GM12878 (cell line): ENCODE measurements at regions of chr18 and their contacts with region 1.

Region 1: DNA sequence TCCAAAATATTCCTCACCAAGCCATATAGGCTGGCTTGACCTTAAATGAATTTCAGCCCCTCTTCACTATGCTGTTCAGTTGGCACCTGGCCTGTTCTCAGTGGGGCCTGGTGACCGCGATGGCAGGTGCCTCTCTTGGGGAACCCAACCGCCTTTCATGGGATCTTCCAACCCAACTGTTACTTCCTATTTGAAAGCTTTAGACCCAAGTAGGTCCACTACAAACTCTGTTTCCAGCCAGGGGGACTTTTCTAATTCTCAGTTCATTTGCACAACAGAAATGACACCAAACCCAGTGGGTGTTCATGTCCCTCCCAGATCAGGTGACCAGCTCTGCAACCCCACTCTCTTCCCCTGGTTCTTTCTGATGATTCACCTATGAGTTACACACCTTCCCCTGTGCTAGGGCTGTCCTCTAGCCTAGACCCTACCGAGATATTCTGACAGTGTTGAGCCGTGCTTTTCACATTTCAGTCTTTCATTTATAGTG is 35.6 kb upstream of the NDUFV2 start:
- DNase-seq: peak; percentile 96
- ATAC-seq: peak; percentile 86
- H3K4me3 ChIP-seq: peak overlapping the region; percentile 8; the same call in 1 of the 2 replicates
- H3K27ac ChIP-seq: peak overlapping the region; percentile 96
- H3K4me1 ChIP-seq: peaks cover 66% of the 10 kb centered on the region
- H3K27me3 ChIP-seq: no peaks in the 10 kb centered on the region
- CTCF ChIP-seq: no peak
- EP300 ChIP-seq: peak; percentile 73 to 89
- POLR2A ChIP-seq: peak; percentile 23
- RAD21 ChIP-seq: no peak

Region 2: DNA sequence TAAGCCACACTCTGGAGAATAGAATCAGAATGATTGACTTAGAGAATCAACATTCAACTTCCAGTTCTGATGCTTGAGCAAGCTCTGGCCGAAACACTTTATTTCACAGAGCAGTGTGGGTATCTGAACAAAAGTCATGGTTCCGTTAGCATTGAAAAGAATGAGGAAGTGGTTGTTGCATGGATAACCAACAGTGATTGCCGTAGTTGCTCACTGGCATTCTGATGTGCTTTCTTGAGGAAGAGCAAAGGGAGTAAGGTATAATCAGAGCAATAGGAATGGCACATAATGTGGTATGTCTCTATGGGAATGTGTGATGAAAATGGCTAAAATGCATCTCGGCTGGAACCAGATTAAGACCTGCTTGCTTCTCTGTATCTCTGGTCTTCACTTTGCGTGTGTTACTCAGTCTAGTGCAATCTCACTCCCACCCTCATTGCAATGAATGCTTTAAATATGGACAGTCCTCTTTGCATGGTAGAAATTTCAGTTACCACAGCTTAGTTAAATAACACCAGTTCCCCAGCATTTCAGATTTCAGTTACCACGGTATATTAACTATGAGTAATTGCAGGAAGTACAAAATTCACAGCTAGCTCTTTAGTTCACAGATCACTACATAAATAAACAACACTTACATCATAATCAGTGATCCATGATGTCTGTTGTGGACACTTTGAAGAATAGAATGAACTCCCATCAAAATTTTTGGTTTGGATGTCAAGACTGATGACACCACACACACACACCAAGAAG is 465.4 kb before region 1 on chr18:
- CTCF ChIA-PET with region 1: no interaction called
- POLR2A ChIA-PET with region 1: no interaction called
- RAD21 ChIA-PET with region 1: interaction called, 4 read pairs
- SMC1A ChIA-PET with region 1: interaction called, 4 read pairs
- in situ Hi-C with region 1: no loop called
- intact Hi-C with region 1: loop called (anchors 2 kb)
- DNase-seq: peak; percentile 87
- ATAC-seq: peak; percentile 81
- H3K4me3 ChIP-seq: no peak overlapping the region
- H3K27ac ChIP-seq: peak overlapping the region; percentile 92
- H3K4me1 ChIP-seq: peaks cover 43% of the 10 kb centered on the region
- H3K27me3 ChIP-seq: no peaks in the 10 kb centered on the region
- CTCF ChIP-seq: no peak
- EP300 ChIP-seq: peak; percentile 83 to 85; a peak in 3 of 4 replicates
- POLR2A ChIP-seq: no peak
- RAD21 ChIP-seq: peak; percentile 14; the same call in 1 of the 2 replicates

Region 3: GRCh38 chr18:8771930-8772329 is 294.9 kb before region 1 on chr18:
- CTCF ChIA-PET with region 1: no interaction called
- POLR2A ChIA-PET with region 1: no interaction called
- RAD21 ChIA-PET with region 1: no interaction called
- SMC1A ChIA-PET with region 1: no interaction called
- in situ Hi-C with region 1: no loop called
- intact Hi-C with region 1: no loop called
- DNase-seq: no peak
- ATAC-seq: no peak
- H3K4me3 ChIP-seq: no peak overlapping the region
- H3K27ac ChIP-seq: no peak overlapping the region
- H3K4me1 ChIP-seq: no peaks in the 10 kb centered on the region
- H3K27me3 ChIP-seq: peaks cover 0 to 3% of the 10 kb centered on the region in 2 experiments; a peak in 2 of 4 replicates
- CTCF ChIP-seq: no peak
- EP300 ChIP-seq: no peak
- POLR2A ChIP-seq: no peak
- RAD21 ChIP-seq: no peak

Region 4: GRCh38 chr18:9055185-9055584 is 11.7 kb before region 1 on chr18:
- CTCF ChIA-PET with region 1: interaction called, 12 read pairs
- POLR2A ChIA-PET with region 1: no interaction called
- RAD21 ChIA-PET with region 1: interaction called, 4 read pairs
- SMC1A ChIA-PET with region 1: interaction called, 9 read pairs
- in situ Hi-C with region 1: no loop called
- intact Hi-C with region 1: no loop called
- DNase-seq: no peak
- ATAC-seq: peak; percentile 89
- H3K4me3 ChIP-seq: no peak overlapping the region
- H3K27ac ChIP-seq: no peak overlapping the region
- H3K4me1 ChIP-seq: peaks cover 2% of the 10 kb centered on the region; the same call in 1 of the 2 replicates
- H3K27me3 ChIP-seq: no peaks in the 10 kb centered on the region
- CTCF ChIP-seq: peak in 2 of 3 experiments; percentile 18 to 43; a peak in 1 of 6 replicates
- EP300 ChIP-seq: no peak
- POLR2A ChIP-seq: no peak
- RAD21 ChIP-seq: peak; percentile 40

Region 5: GRCh38 chr18:9102508-9103375 is 35.9 kb after region 1 on chr18 and contains the start of gene NDUFV2:
- CTCF ChIA-PET with region 1: interaction called, 29 read pairs
- POLR2A ChIA-PET with region 1: interaction called, 6 read pairs
- RAD21 ChIA-PET with region 1: interaction called, 5 read pairs
- SMC1A ChIA-PET with region 1: interaction called, 5 read pairs
- in situ Hi-C with region 1: no loop called
- intact Hi-C with region 1: no loop called
- DNase-seq: peak; percentile 77
- ATAC-seq: peak; percentile 93
- H3K4me3 ChIP-seq: peak within 1 kb of the TSS; percentile 87
- H3K27ac ChIP-seq: peak within 1 kb of the TSS; percentile 85
- H3K4me1 ChIP-seq: peaks cover 5% of the 10 kb centered on the region
- H3K27me3 ChIP-seq: no peaks in the 10 kb centered on the region
- CTCF ChIP-seq: no peak
- EP300 ChIP-seq: no peak
- POLR2A ChIP-seq: peak; percentile 87
- RAD21 ChIP-seq: no peak
- polyA plus RNA-seq, gene NDUFV2: 409 to 471 TPM

Region 6: GRCh38 chr18:9136315-9137155 is 69.7 kb after region 1 on chr18 and contains the start of gene ANKRD12:
- CTCF ChIA-PET with region 1: interaction called, 79 read pairs
- POLR2A ChIA-PET with region 1: interaction called, 23 read pairs
- RAD21 ChIA-PET with region 1: interaction called, 20 read pairs
- SMC1A ChIA-PET with region 1: interaction called, 53 read pairs
- in situ Hi-C with region 1: loop called (anchors 5 kb)
- intact Hi-C with region 1: no loop called
- DNase-seq: peak; percentile 89
- ATAC-seq: peak; percentile 86
- H3K4me3 ChIP-seq: peak within 1 kb of the TSS; percentile 92
- H3K27ac ChIP-seq: peak within 1 kb of the TSS; percentile 80
- H3K4me1 ChIP-seq: no peaks in the 10 kb centered on the region; the same call in 1 of the 2 replicates
- H3K27me3 ChIP-seq: no peaks in the 10 kb centered on the region
- CTCF ChIP-seq: no peak
- EP300 ChIP-seq: 0 out of 4 replicates have a peak, but pooled peaks of 1 of the 2 experiments have one; percentile 16
- POLR2A ChIP-seq: peak; percentile 90
- RAD21 ChIP-seq: no peak
- polyA plus RNA-seq, gene ANKRD12: 20.0 to 20.3 TPM

Region 7: DNA sequence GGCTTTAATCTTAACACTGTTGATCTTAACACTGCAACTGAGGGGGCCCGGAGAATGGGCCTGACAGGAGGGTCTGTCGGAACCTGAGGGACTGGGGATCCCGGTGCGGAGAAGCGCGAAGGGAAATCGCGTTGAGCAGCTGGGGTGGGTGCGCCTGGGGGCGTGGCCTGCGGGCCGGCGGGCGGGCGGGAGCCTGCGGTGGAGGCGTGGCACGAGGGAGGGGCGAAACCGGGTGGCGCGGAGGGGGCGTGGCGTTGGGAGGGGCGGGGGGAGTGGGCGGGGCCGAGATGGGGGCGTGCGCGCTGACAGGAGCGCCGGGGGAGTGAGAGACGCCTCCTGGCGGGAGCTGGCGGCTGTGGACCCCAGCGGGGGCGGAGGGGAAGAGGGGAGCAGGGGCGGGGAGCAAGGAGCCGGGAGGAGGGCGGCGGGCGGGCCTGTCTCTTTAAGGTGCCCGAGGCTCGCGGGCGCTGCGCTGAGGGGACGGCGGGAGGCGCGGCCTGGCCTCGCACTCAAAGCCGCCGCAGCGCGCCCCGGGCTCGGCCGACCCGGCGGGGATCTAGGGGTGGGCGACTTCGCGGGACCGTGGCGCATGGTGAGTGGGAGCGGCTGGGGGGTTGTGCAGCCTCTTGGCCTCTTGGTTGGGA is 267.6 kb after region 1 on chr18 and contains the start of gene TWSG1:
- CTCF ChIA-PET with region 1: no interaction called
- POLR2A ChIA-PET with region 1: no interaction called
- RAD21 ChIA-PET with region 1: interaction called, 4 read pairs
- SMC1A ChIA-PET with region 1: no interaction called
- in situ Hi-C with region 1: loop called (anchors 10 kb)
- intact Hi-C with region 1: no loop called
- DNase-seq: peak; percentile 62
- ATAC-seq: peak; percentile 95
- H3K4me3 ChIP-seq: peak within 1 kb of the TSS; percentile 89
- H3K27ac ChIP-seq: peak within 1 kb of the TSS; percentile 36
- H3K4me1 ChIP-seq: peaks cover 5% of the 10 kb centered on the region; the same call in 1 of the 2 replicates
- H3K27me3 ChIP-seq: no peaks in the 10 kb centered on the region
- CTCF ChIP-seq: peak in 2 of 3 experiments; percentile 49 to 64; a peak in 3 of 6 replicates
- EP300 ChIP-seq: no peak
- POLR2A ChIP-seq: peak; percentile 78
- RAD21 ChIP-seq: peak; percentile 46
- polyA plus RNA-seq, gene TWSG1: 11.1 to 11.4 TPM

Region 8: DNA sequence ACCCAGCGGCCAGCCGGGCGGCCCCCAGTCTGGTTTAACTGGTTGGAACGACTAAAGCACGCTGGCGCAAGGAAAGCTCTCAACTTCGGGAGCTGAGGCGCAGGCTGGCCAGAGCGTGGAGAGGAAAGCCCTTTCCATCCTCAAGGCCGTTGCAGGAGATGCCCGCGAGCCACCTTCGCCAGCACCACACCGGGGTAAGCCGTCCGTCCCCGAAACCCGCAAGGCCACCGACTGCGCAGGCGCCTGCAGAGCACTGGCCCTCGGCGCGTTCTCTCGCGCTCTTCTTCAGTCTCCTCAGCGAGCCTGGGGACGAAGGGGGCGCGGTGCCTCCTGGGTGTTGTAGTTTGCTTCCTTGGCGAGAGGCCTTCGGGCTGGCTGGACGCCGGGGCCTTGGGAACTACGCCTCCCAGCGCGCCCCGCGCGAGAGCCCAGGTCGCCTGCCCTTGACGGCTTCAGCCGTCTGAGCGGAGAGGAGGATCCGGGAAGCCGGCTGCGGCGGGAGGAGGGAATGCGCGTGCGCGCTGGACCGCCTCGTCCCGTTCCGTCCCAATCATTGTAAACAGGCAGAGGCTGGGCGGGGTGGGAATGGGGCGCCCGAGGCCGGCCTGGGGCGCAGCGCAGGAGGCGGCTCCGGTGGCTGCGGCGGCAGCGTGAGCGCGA is 408.3 kb after region 1 on chr18 and contains the start of gene RALBP1:
- CTCF ChIA-PET with region 1: no interaction called
- POLR2A ChIA-PET with region 1: interaction called, 3 read pairs
- RAD21 ChIA-PET with region 1: no interaction called
- SMC1A ChIA-PET with region 1: no interaction called
- in situ Hi-C with region 1: no loop called
- intact Hi-C with region 1: loop called (anchors 5 kb)
- DNase-seq: peak; percentile 94
- ATAC-seq: peak; percentile 96
- H3K4me3 ChIP-seq: peak within 1 kb of the TSS; percentile 97
- H3K27ac ChIP-seq: peak within 1 kb of the TSS; percentile 83
- H3K4me1 ChIP-seq: peaks cover 11% of the 10 kb centered on the region
- H3K27me3 ChIP-seq: no peaks in the 10 kb centered on the region; a peak in 1 of 4 replicates
- CTCF ChIP-seq: peak in 1 of 3 experiments; percentile 39; a peak in 2 of 6 replicates
- EP300 ChIP-seq: no peak
- POLR2A ChIP-seq: peak; percentile 82
- RAD21 ChIP-seq: peak; percentile 47
- polyA plus RNA-seq, gene RALBP1: 11.2 to 17.9 TPM